Ovary (tissue), 10 donors: ENCODE measurements at regions of chr1 and their contacts with region 1.

Region 1: GRCh38 chr1:218817691-218818465 is 355.8 kb upstream of the LYPLAL1 start:
- DNase-seq: peak in 3 of 5 donors; percentile 15 to 33 (median 18)
- H3K4me3 ChIP-seq: no peak overlapping the region
- H3K27ac ChIP-seq: peak overlapping the region in 1 of 2 donors; percentile 25
- H3K4me1 ChIP-seq: peaks cover 7% of the 10 kb centered on the region
- H3K27me3 ChIP-seq: no peaks in the 10 kb centered on the region
- CTCF ChIP-seq: no peak
- EP300 ChIP-seq: no peak
- POLR2A ChIP-seq: no peak

Region 2: GRCh38 chr1:218101409-218101808 is 716.5 kb before region 1 on chr1:
- intact Hi-C with region 1: no loop called
- DNase-seq: no peak
- H3K4me3 ChIP-seq: no peak overlapping the region
- H3K27ac ChIP-seq: no peak overlapping the region
- H3K4me1 ChIP-seq: no peaks in the 10 kb centered on the region
- H3K27me3 ChIP-seq: no peaks in the 10 kb centered on the region
- CTCF ChIP-seq: no peak
- EP300 ChIP-seq: no peak
- POLR2A ChIP-seq: no peak

Region 3: DNA sequence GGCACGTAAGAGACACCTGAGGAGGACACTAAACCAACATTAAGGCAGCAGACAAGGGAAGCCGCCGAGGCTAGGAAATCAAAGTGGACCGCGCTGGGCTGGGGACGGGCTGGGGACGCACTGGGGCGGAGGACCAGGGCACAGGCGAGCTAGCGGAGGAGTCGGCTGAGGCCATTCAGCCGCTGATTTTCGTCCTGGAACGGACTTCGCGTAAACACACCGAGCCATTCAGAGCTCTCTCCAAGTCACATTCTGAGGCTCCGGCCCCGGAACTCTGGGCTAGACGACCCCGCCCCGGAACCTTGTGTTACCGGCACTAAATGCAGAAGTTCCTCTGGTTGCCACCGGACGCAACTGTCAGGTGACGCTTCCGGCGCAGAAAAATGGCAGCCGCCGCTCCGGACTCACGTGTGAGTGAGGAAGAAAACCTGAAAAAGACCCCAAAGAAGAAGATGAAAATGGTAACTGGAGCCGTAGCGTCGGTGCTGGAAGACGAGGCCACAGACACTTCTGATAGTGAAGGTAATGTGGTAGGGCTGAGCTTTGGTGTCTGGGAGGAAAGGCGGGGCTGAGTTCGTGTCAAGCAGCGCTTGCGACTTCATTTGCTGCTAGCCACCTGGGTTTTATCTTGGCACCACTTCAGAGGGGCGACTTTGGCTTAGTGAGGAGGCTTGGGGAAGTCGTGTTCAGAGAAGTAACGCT is 532.8 kb before region 1 on chr1 and contains the start of gene RRP15:
- intact Hi-C with region 1: loop called in 1 of 4 experiments (anchors 5 kb)
- DNase-seq: peak; percentile 79 to 90 (median 86)
- H3K4me3 ChIP-seq: peak within 1 kb of the TSS; percentile 79
- H3K27ac ChIP-seq: peak within 1 kb of the TSS; percentile 34 to 58
- H3K4me1 ChIP-seq: peaks cover 3% of the 10 kb centered on the region
- H3K27me3 ChIP-seq: no peaks in the 10 kb centered on the region
- CTCF ChIP-seq: no peak
- EP300 ChIP-seq: no peak
- POLR2A ChIP-seq: no peak
- total RNA-seq, gene RRP15: 5.3 to 27.9 (median 18.6) TPM

Region 4: DNA sequence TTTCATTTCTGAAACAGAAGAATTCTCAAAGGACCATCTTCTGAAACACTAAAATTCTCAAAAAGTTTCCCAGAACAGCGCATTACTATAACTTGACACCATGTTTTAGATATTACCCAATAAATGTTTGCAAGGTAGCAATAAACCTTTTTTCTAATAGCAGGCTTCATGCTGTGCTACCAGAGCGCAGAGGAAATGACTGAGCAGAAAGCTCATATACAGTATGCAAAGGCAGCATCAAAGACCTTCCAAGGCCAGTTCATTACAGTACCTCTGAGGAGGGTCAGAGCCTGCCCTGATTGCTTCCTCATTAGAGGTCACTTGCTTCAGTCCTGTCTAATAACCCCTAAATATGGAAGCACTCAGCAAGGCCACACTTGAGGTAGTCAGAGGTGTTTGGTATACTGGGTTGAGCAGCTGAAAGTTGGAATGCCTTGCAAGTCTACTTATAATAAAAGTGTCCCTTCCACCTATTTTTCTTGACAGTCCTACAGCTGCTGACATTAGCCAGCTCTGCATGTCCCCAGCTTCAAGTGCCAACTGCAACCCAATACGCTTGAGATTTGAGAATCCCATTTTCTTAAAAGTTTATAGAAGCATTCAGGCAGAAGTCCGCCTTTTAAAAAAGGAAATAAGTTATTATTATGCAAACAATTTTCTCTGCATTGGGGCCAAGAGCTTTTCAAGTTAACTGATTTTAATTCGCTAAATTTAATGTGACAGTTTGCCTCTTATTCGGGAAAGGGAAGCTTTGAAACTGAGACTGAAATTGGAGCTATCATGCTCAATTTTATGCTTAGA is 587.9 kb after region 1 on chr1:
- intact Hi-C with region 1: no loop called
- DNase-seq: no peak
- H3K4me3 ChIP-seq: no peak overlapping the region
- H3K27ac ChIP-seq: no peak overlapping the region
- H3K4me1 ChIP-seq: no peaks in the 10 kb centered on the region
- H3K27me3 ChIP-seq: no peaks in the 10 kb centered on the region
- CTCF ChIP-seq: no peak
- EP300 ChIP-seq: no peak
- POLR2A ChIP-seq: no peak